ENCODE measurements at regions of chr11 and their contacts with region 1.

Region 1: GRCh38 chr11:116835791-116836631 is 1.4 kb downstream of the APOA1 start:
- DNase-seq: peak; percentile 86
- H3K4me3 Mint-ChIP-seq: peak overlapping the region; percentile 61
- H3K27ac Mint-ChIP-seq: peak overlapping the region; percentile 26
- H3K4me1 Mint-ChIP-seq: peaks cover 18% of the 10 kb centered on the region
- H3K27me3 Mint-ChIP-seq: no peaks in the 10 kb centered on the region

Region 2: DNA sequence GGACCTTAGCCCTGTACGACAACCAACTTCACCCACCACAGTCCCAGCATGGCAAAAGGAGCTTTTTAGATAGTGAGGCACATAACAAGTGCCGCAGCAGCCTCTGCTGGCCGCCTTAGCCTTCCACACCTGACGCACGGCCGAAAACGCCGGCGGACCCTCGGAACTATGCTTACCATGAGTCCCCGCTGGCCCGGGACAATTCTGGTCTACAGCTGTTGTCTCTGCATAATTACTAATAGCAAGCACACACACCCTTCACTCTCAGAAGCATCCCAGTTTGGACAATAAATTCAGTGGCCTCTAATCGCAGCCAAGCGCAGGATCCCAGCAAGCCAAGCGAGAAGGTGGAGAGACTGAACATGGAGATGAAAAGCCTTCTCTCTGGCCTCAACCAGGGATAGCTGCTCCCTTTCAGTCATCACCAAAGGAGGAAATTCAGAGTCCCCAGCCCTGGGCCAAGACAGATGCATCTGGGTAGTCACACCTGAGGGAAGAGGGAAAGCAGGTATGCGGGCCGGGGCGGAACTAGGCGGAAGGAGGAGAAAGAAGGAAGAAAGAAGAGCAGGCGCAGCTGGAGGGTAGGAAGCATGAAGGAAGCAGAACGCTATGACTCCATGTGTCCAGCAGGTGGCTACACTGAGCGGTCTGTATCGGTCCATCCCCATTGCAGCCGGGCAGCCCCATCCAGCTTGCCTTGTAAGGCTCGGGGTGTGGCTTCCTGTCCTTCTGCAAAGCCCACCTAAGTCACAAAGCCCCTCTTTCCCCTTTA is 103.6 kb before region 1 on chr11:
- CTCF ChIA-PET with region 1: interaction called, 31 read pairs
- POLR2A ChIA-PET with region 1: interaction called, 8 read pairs
- DNase-seq: peak; percentile 67
- H3K4me3 Mint-ChIP-seq: no peak overlapping the region
- H3K27ac Mint-ChIP-seq: no peak overlapping the region
- H3K4me1 Mint-ChIP-seq: peaks cover 6% of the 10 kb centered on the region
- H3K27me3 Mint-ChIP-seq: no peaks in the 10 kb centered on the region

Region 3: GRCh38 chr11:116782728-116783127 is 53.3 kb before region 1 on chr11:
- CTCF ChIA-PET with region 1: interaction called, 158 read pairs
- POLR2A ChIA-PET with region 1: interaction called, 16 read pairs
- DNase-seq: no peak
- H3K4me3 Mint-ChIP-seq: no peak overlapping the region
- H3K27ac Mint-ChIP-seq: peak overlapping the region; percentile 75
- H3K4me1 Mint-ChIP-seq: peaks cover 79% of the 10 kb centered on the region
- H3K27me3 Mint-ChIP-seq: no peaks in the 10 kb centered on the region

Region 4: GRCh38 chr11:116798368-116798767 is 37.6 kb before region 1 on chr11:
- CTCF ChIA-PET with region 1: interaction called, 158 read pairs
- POLR2A ChIA-PET with region 1: no interaction called
- DNase-seq: no peak
- H3K4me3 Mint-ChIP-seq: no peak overlapping the region
- H3K27ac Mint-ChIP-seq: no peak overlapping the region
- H3K4me1 Mint-ChIP-seq: no peaks in the 10 kb centered on the region
- H3K27me3 Mint-ChIP-seq: peaks cover 23% of the 10 kb centered on the region

Region 5: GRCh38 chr11:116853461-116854073 is 17.6 kb after region 1 on chr11:
- CTCF ChIA-PET with region 1: interaction called, 116 read pairs
- POLR2A ChIA-PET with region 1: interaction called, 93 read pairs
- DNase-seq: peak; percentile 75
- H3K4me3 Mint-ChIP-seq: peak overlapping the region; percentile 67
- H3K27ac Mint-ChIP-seq: peak overlapping the region; percentile 96
- H3K4me1 Mint-ChIP-seq: peaks cover 64% of the 10 kb centered on the region
- H3K27me3 Mint-ChIP-seq: no peaks in the 10 kb centered on the region

Region 6: GRCh38 chr11:116874254-116874653 is 38.2 kb after region 1 on chr11:
- CTCF ChIA-PET with region 1: interaction called, 16 read pairs
- POLR2A ChIA-PET with region 1: no interaction called
- DNase-seq: no peak
- H3K4me3 Mint-ChIP-seq: no peak overlapping the region
- H3K27ac Mint-ChIP-seq: no peak overlapping the region
- H3K4me1 Mint-ChIP-seq: peaks cover 19% of the 10 kb centered on the region
- H3K27me3 Mint-ChIP-seq: no peaks in the 10 kb centered on the region

Region 7: GRCh38 chr11:116938471-116939070 is 102.6 kb after region 1 on chr11:
- CTCF ChIA-PET with region 1: no interaction called
- POLR2A ChIA-PET with region 1: no interaction called
- DNase-seq: no peak
- H3K4me3 Mint-ChIP-seq: no peak overlapping the region
- H3K27ac Mint-ChIP-seq: no peak overlapping the region
- H3K4me1 Mint-ChIP-seq: peaks cover 1% of the 10 kb centered on the region
- H3K27me3 Mint-ChIP-seq: no peaks in the 10 kb centered on the region

Region 8: GRCh38 chr11:117107701-117108590 is 271.9 kb after region 1 on chr11:
- CTCF ChIA-PET with region 1: interaction called, 31 read pairs
- POLR2A ChIA-PET with region 1: interaction called, 3 read pairs
- DNase-seq: no peak
- H3K4me3 Mint-ChIP-seq: no peak overlapping the region
- H3K27ac Mint-ChIP-seq: no peak overlapping the region
- H3K4me1 Mint-ChIP-seq: peaks cover 5% of the 10 kb centered on the region
- H3K27me3 Mint-ChIP-seq: no peaks in the 10 kb centered on the region